Left cardiac atrium (tissue), 4 donors: ENCODE measurements at regions of chr1 and their contacts with region 1.

Region 1: DNA sequence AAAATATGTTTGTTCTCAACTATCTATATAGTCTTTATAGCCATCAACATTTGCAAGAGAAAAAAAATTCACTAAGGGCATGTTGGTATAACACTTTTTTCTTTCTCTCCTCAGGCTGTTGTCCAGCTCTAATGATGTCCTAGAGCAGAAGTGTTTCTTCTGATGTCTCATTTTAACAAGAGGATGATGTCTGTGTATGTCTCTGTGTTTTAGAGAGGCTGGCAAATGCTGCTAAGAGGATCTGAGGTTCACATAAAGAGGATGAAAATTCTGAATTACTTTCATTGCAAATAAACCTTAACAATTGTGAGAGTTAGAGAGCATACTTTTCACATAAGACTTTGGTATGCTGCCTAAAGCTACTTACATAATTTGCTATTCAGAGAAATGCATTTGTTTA is 2.6 kb upstream of the BRINP3 start:
- DNase-seq: no peak
- ATAC-seq: no peak

Region 2: DNA sequence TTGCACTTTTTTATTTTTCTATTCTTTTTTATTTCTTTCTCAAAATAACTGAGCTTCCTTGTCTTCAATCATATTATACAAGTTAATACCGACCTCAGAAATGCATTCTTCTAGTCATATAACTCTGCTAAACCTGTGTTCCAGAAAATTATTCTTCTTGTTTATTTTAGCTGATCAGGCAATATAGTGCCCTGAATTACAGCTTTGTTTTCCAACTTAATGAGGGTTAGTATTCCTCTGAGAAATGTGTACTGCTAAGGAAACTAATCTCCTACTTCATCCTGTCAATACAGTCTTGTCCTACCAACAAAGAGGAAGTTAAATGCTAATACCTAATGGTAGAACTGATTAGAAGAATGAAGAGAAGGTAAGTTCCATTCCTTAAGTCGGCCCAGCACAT is 15.5 kb before region 1 on chr1:
- intact Hi-C with region 1: loop called in 1 of 2 experiments (anchors 2 kb)
- DNase-seq: no peak
- ATAC-seq: no peak

Region 3: GRCh38 chr1:190563243-190563642 is 83.0 kb after region 1 on chr1:
- intact Hi-C with region 1: no loop called
- DNase-seq: no peak
- ATAC-seq: no peak

Region 4: DNA sequence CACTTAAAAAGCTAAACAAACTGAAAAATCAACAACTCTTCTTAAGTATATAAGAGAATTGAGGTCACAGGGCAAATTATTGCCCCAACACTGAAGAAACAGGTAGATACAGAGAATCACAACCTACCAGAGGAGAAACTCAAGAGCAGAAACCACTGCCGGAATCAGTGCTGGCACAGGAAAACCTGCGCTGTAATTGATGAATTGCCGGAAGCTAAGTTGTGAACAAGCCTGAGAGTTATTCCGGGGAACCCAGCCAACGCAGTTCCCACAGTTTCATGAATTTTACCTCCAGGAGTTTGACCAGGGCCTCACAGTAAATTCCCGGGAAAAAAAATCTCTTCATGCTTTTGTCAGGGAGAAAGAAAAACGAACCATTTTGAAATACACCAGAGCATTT is 654.6 kb after region 1 on chr1:
- intact Hi-C with region 1: no loop called
- DNase-seq: no peak
- ATAC-seq: no peak